ENCODE measurements at regions of chr16 and their contacts with region 1.

Region 1: DNA sequence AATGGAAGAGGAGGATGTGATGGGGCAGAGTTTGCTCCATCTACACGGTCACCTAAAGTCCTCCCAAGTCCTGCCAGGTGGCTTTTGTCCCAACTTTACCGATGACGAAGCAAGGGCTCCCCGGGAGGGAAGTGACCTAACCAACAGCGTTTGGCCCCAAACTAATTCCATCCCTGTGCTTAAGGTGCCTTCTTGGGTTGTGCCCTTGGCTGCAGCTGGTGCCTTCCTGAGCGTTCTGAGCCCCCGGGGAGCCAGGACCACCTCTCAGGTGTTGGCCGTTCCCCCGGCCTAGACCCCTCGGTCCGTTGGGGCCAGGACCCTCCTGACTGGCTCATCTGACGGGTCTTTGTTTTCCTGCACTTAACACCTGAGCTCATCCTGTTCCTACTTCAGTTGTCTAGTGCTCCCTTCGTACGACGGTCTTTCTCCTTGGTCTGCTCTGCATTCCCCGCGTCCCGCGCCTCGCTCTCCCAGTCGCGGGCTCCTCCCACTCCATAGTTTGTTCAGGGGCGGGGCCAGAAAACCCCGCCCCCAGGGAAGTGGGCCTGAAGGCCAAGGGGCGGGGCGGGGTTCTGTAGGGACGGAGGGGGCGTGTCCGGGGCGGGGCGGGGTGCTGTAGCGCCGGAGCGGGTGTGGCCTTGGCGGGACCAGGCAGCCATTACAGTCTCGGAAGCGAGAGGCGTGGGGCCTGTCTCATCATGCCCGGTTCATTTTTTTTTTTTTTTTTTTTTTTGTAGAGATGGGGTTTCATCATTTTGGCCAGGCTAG is 822 bp upstream of the ZSCAN10 start:
- DNase-seq: peak; percentile 86 to 96
- H3K4me3 ChIP-seq: peak overlapping the region; percentile 67 to 96 (median 88)
- H3K27ac ChIP-seq: peak overlapping the region; percentile 93
- H3K4me1 ChIP-seq: peaks cover 14 to 30% (median 16%) of the 10 kb centered on the region in 4 experiments
- H3K27me3 ChIP-seq: no peaks in the 10 kb centered on the region
- CTCF ChIP-seq: no peak
- EP300 ChIP-seq: no peak
- POLR2A ChIP-seq: peak; percentile 84 to 87
- RAD21 ChIP-seq: no peak

Region 2: GRCh38 chr16:3017794-3018506 is 82.0 kb before region 1 on chr16 and contains the start of gene CLDN6:
- CTCF ChIA-PET with region 1: interaction called, 8 read pairs
- POLR2A ChIA-PET with region 1: interaction called, 76 read pairs
- DNase-seq: peak; percentile 92 to 100
- H3K4me3 ChIP-seq: peak within 1 kb of the TSS; percentile 58 to 96 (median 92)
- H3K27ac ChIP-seq: peak within 1 kb of the TSS; percentile 96
- H3K4me1 ChIP-seq: peaks cover 5 to 43% (median 37%) of the 10 kb centered on the region in 4 experiments
- H3K27me3 ChIP-seq: no peaks in the 10 kb centered on the region
- CTCF ChIP-seq: peak; percentile 85 to 94 (median 92)
- EP300 ChIP-seq: peak in 1 of 2 experiments; percentile 73; a peak in 1 of 3 replicates
- POLR2A ChIP-seq: peak; percentile 98 to 99
- RAD21 ChIP-seq: peak; percentile 72 to 81
- total RNA-seq, gene CLDN6: 747 and 793 TPM in 2 replicates

Region 3: GRCh38 chr16:3038256-3038655 is 61.7 kb before region 1 on chr16:
- CTCF ChIA-PET with region 1: interaction called, 7 read pairs
- POLR2A ChIA-PET with region 1: interaction called, 61 read pairs
- DNase-seq: peak in 1 of 2 experiments; percentile 63
- H3K4me3 ChIP-seq: no peak overlapping the region; a peak in 1 of 8 replicates
- H3K27ac ChIP-seq: no peak overlapping the region; the same call in 1 of the 2 replicates
- H3K4me1 ChIP-seq: peaks cover 3 to 19% (median 12%) of the 10 kb centered on the region in 4 experiments
- H3K27me3 ChIP-seq: peaks cover 0 to 11% (median 3%) of the 10 kb centered on the region in 4 experiments; a peak in 1 of 7 replicates
- CTCF ChIP-seq: no peak
- EP300 ChIP-seq: no peak
- POLR2A ChIP-seq: no peak
- RAD21 ChIP-seq: no peak

Region 4: GRCh38 chr16:3065069-3065741 is 34.7 kb before region 1 on chr16 and contains the start of gene IL32:
- CTCF ChIA-PET with region 1: interaction called, 35 read pairs
- POLR2A ChIA-PET with region 1: interaction called, 140 read pairs
- DNase-seq: no peak
- H3K4me3 ChIP-seq: no peak within 1 kb of the TSS
- H3K27ac ChIP-seq: peak within 1 kb of the TSS; percentile 23; the same call in 1 of the 2 replicates
- H3K4me1 ChIP-seq: peaks cover 0 to 3% (median 1%) of the 10 kb centered on the region in 4 experiments; a peak in 2 of 7 replicates
- H3K27me3 ChIP-seq: no peaks in the 10 kb centered on the region
- CTCF ChIP-seq: no peak
- EP300 ChIP-seq: no peak
- POLR2A ChIP-seq: no peak
- RAD21 ChIP-seq: no peak
- total RNA-seq, gene IL32: 2.0 and 2.7 TPM in 2 replicates

Region 5: GRCh38 chr16:3087243-3088235 is 12.4 kb before region 1 on chr16:
- CTCF ChIA-PET with region 1: interaction called, 293 read pairs
- POLR2A ChIA-PET with region 1: interaction called, 137 read pairs
- DNase-seq: no peak
- H3K4me3 ChIP-seq: no peak overlapping the region
- H3K27ac ChIP-seq: no peak overlapping the region; the same call in 1 of the 2 replicates
- H3K4me1 ChIP-seq: peaks cover 0 to 6% (median 5%) of the 10 kb centered on the region in 4 experiments; a peak in 6 of 7 replicates
- H3K27me3 ChIP-seq: no peaks in the 10 kb centered on the region
- CTCF ChIP-seq: peak; percentile 55 to 67 (median 65)
- EP300 ChIP-seq: no peak
- POLR2A ChIP-seq: peak in 1 of 2 experiments; percentile 72; a peak in 2 of 3 replicates
- RAD21 ChIP-seq: peak; percentile 25 to 51; a peak in 3 of 4 replicates

Region 6: DNA sequence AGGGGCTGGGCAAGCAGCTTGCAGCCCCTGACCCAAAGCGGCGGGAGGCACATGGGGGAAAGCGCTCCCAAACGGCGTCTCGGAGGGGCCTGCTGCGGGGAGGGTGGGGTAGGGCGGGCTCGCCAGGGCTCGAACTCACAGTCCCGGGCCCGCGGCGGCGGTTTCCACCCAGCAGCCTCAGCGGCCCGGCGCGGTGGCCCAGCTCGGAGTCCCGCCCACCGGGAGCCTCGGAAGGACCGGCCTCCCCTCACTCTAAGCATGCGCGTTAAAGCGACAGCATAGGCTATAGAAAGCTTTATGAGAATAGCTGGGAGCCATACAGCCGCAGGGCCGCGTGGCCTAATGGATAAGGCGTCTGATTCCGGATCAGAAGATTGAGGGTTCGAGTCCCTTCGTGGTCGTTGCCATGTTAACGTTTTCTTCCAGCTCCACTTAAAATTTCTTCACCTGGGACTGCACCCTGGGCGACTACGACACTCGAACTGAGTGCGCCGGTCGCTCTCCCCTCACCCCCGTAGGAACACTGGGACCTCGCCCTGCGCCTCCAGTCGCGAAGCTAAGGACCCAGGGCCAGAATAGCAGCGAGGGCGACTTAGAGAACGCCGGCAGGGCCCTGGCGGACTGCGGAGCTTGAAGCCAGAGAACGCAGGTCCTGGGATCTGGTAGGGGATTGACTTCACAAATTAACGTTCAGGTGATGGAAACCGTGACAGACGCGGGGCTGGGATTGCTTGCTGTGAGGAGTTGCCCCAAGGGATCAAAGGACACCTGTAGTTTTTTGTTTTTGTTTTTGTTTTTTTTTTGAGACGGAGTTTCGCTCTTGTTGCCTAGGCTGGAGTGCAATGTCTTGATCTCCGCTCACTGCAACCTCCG is 50.7 kb after region 1 on chr16:
- CTCF ChIA-PET with region 1: interaction called, 4 read pairs
- POLR2A ChIA-PET with region 1: interaction called, 69 read pairs
- DNase-seq: peak; percentile 96 to 100
- H3K4me3 ChIP-seq: peak overlapping the region; percentile 68 to 90 (median 74)
- H3K27ac ChIP-seq: no peak overlapping the region
- H3K4me1 ChIP-seq: peaks cover 0 to 5% (median 3%) of the 10 kb centered on the region in 4 experiments; a peak in 4 of 7 replicates
- H3K27me3 ChIP-seq: peaks cover 0 to 18% (median 12%) of the 10 kb centered on the region in 4 experiments; a peak in 5 of 7 replicates
- CTCF ChIP-seq: no peak
- EP300 ChIP-seq: no peak
- POLR2A ChIP-seq: no peak
- RAD21 ChIP-seq: no peak

Measured in H1 (cell line).